Common myeloid progenitor, CD34-positive (primary cell): ENCODE measurements at regions of chr15 and their contacts with region 1.

Region 1: GRCh38 chr15:42137431-42138261 is 18.8 kb downstream of the PLA2G4F start:
- DNase-seq: peak; percentile 40 to 71 (median 61)
- H3K4me3 ChIP-seq: no peak overlapping the region
- H3K27ac ChIP-seq: no peak overlapping the region
- H3K4me1 ChIP-seq: no peaks in the 10 kb centered on the region
- H3K27me3 ChIP-seq: no peaks in the 10 kb centered on the region

Region 2: GRCh38 chr15:41989259-41989933 is 148.2 kb before region 1 on chr15:
- CTCF ChIA-PET with region 1: interaction called, 15 read pairs
- POLR2A ChIA-PET with region 1: no interaction called
- DNase-seq: peak; percentile 54 to 75 (median 63)
- H3K4me3 ChIP-seq: no peak overlapping the region
- H3K27ac ChIP-seq: no peak overlapping the region
- H3K4me1 ChIP-seq: no peaks in the 10 kb centered on the region
- H3K27me3 ChIP-seq: no peaks in the 10 kb centered on the region

Region 3: GRCh38 chr15:42056934-42057779 is 80.5 kb before region 1 on chr15:
- CTCF ChIA-PET with region 1: interaction called, 303 read pairs
- POLR2A ChIA-PET with region 1: no interaction called
- DNase-seq: peak; percentile 71 to 78 (median 71)
- H3K4me3 ChIP-seq: peak overlapping the region in 6 of 7 experiments; percentile 20 to 70 (median 56)
- H3K27ac ChIP-seq: no peak overlapping the region
- H3K4me1 ChIP-seq: peaks cover 0 to 10% (median 7%) of the 10 kb centered on the region in 4 experiments
- H3K27me3 ChIP-seq: peaks cover 0 to 8% (median 5%) of the 10 kb centered on the region in 5 experiments

Region 4: GRCh38 chr15:42084460-42085235 is 53.0 kb before region 1 on chr15:
- CTCF ChIA-PET with region 1: interaction called, 10 read pairs
- POLR2A ChIA-PET with region 1: interaction called, 4 read pairs
- DNase-seq: peak; percentile 12 to 70 (median 54)
- H3K4me3 ChIP-seq: peak overlapping the region in 2 of 7 experiments; percentile 19 to 30
- H3K27ac ChIP-seq: no peak overlapping the region
- H3K4me1 ChIP-seq: peaks cover 0 to 17% (median 9%) of the 10 kb centered on the region in 4 experiments
- H3K27me3 ChIP-seq: peaks cover 0 to 2% (median 0%) of the 10 kb centered on the region in 5 experiments

Region 5: DNA sequence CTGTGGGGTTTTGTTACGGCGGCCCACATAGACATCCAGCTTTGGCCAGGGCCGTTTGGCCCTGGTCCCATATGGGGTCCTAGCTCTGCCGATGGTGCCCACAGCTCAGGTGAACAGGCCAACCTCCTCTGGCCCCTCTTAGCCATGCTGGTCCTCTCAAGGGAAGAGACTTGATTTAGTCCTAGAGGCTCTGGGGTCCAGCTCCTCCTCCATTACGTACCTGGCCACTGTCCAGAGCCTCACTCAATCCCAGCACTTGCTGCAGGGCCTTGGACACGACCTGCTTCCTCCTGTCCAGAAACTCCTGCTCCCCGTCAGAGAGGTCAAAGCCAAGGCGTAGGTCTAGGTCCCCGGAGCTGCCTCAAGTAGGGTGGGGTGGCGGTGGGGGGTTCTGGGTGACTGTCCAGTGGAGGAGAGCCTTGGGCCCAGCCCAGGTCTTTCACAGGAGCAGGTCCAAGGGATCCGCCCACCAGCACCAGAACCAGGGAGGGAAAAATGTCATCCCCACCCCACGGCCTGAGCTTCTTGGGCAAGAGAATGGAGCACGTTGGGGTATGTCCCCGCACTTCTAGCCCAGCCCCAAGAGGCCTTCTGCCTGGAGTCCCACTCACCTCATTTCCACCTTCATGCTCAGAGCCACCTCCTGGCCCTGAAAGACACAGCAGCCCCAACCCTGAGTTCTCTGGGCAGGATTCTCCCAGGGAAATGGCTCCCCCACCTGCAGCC is 12.0 kb after region 1 on chr15:
- CTCF ChIA-PET with region 1: interaction called, 16 read pairs
- POLR2A ChIA-PET with region 1: no interaction called
- DNase-seq: no peak
- H3K4me3 ChIP-seq: no peak overlapping the region
- H3K27ac ChIP-seq: no peak overlapping the region
- H3K4me1 ChIP-seq: peaks cover 0 to 3% (median 0%) of the 10 kb centered on the region in 4 experiments
- H3K27me3 ChIP-seq: no peaks in the 10 kb centered on the region

Region 6: GRCh38 chr15:42175671-42176070 is 38.0 kb after region 1 on chr15:
- CTCF ChIA-PET with region 1: no interaction called
- POLR2A ChIA-PET with region 1: no interaction called
- DNase-seq: no peak
- H3K4me3 ChIP-seq: no peak overlapping the region
- H3K27ac ChIP-seq: no peak overlapping the region
- H3K4me1 ChIP-seq: no peaks in the 10 kb centered on the region
- H3K27me3 ChIP-seq: no peaks in the 10 kb centered on the region

Region 7: DNA sequence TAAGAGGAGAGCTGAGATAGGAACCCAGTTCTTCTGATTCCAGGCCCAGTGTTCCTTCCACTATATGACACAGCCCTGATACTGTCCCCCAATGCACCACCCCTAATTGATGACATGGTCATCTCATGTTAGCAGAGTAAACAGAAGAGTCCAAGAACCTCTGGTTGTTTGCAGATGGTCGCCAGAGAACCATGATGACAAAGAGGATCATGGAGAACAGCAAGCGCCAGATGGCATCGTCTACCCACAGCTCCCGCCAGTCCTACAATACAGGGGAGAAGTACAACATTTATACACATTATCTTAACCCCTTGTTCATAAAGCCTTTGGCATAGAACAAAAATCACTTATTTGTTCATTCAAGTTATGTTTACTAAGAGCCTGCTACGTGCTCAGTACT is 89.0 kb after region 1 on chr15:
- CTCF ChIA-PET with region 1: no interaction called
- POLR2A ChIA-PET with region 1: no interaction called
- DNase-seq: no peak
- H3K4me3 ChIP-seq: no peak overlapping the region
- H3K27ac ChIP-seq: no peak overlapping the region
- H3K4me1 ChIP-seq: no peaks in the 10 kb centered on the region
- H3K27me3 ChIP-seq: no peaks in the 10 kb centered on the region